Aorta (tissue), 5 donors: ENCODE measurements at regions of chr10 and their contacts with region 1.

Region 1: GRCh38 chr10:5889624-5890451 is at the starts of genes ANKRD16 and FBH1:
- DNase-seq: peak; percentile 99
- ATAC-seq: peak; percentile 99
- H3K4me3 ChIP-seq: peak within 1 kb of the TSS; percentile 96 to 100
- H3K27ac ChIP-seq: peak within 1 kb of the TSS; percentile 55 to 70
- H3K4me1 ChIP-seq: peaks cover 3 to 4% of the 10 kb centered on the region in 2 donors
- H3K27me3 ChIP-seq: no peaks in the 10 kb centered on the region
- total RNA-seq, gene ANKRD16: 4.6 to 8.8 TPM
- total RNA-seq, gene FBH1: 108 to 110 TPM

Region 2: DNA sequence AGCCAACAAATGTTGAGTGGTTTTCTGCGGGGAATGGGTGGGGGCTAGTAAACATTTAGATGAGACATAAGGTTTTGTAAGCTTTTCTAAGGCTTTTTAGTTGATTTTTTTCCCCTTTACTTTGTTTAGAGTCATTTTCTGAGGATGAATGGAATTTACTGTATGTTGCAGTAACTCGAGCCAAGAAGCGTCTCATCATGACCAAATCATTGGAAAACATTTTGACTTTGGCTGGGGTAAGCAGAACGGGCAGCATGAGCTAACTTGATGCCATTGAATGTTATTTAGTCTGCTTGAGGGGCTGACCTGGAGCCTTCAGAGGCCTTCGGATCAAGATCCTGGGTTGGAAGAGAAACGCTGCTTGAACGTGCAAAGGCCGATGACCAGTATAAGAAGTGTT is 37.5 kb after region 1 on chr10:
- intact Hi-C with region 1: loop called in 1 of 2 experiments (anchors 5 kb)
- DNase-seq: no peak
- ATAC-seq: no peak
- H3K4me3 ChIP-seq: no peak overlapping the region
- H3K27ac ChIP-seq: peak overlapping the region in 1 of 2 donors; percentile 59
- H3K4me1 ChIP-seq: peaks cover 0 to 3% of the 10 kb centered on the region in 2 donors
- H3K27me3 ChIP-seq: no peaks in the 10 kb centered on the region

Region 3: GRCh38 chr10:5977471-5978229 is 87.8 kb after region 1 on chr10 and contains the start of gene IL15RA:
- intact Hi-C with region 1: loop called in 1 of 2 experiments (anchors 10 kb)
- DNase-seq: peak; percentile 90 to 94
- ATAC-seq: peak; percentile 83
- H3K4me3 ChIP-seq: peak within 1 kb of the TSS; percentile 81 to 84
- H3K27ac ChIP-seq: peak within 1 kb of the TSS; percentile 34 to 40
- H3K4me1 ChIP-seq: no peaks in the 10 kb centered on the region
- H3K27me3 ChIP-seq: no peaks in the 10 kb centered on the region
- total RNA-seq, gene IL15RA: 19.0 to 21.2 TPM